ENCODE measurements at regions of chr3 and their contacts with region 1.

Region 1: DNA sequence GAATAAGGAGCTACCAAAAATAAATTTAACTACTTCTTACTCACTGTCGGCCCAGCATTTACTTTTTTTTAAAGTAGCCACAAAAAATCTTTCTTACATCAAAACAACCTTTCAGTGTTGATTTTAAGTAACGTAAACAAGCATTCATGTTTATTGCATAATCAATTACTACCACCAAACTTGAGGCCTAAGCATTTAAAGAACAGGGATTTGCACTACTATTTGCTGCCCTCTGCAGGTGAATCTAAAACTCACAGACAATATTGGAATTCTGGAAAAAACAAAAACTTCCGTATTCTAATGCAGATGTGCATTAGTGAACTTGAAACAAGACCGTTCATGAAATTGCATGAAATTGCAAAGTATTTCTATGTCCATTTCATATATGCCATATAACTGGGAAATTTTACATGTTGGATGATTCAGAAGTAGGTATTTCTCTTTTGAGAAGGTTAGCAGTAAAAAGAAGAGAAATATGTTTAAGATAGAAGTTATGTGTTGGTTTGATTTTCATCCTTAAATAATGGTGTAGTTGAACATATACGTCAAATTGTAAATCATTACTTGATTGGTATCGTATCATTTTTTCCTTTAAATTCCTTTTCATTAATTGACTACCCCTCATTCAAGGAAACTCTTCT is 55.6 kb downstream of the CGGBP1 start:
- DNase-seq: no peak
- H3K4me3 ChIP-seq: no peak overlapping the region
- H3K27ac ChIP-seq: no peak overlapping the region
- H3K4me1 ChIP-seq: no peaks in the 10 kb centered on the region
- H3K27me3 ChIP-seq: no peaks in the 10 kb centered on the region
- CTCF ChIP-seq: peak; percentile 9 to 65 (median 46)
- EP300 ChIP-seq: no peak
- POLR2A ChIP-seq: no peak

Region 2: DNA sequence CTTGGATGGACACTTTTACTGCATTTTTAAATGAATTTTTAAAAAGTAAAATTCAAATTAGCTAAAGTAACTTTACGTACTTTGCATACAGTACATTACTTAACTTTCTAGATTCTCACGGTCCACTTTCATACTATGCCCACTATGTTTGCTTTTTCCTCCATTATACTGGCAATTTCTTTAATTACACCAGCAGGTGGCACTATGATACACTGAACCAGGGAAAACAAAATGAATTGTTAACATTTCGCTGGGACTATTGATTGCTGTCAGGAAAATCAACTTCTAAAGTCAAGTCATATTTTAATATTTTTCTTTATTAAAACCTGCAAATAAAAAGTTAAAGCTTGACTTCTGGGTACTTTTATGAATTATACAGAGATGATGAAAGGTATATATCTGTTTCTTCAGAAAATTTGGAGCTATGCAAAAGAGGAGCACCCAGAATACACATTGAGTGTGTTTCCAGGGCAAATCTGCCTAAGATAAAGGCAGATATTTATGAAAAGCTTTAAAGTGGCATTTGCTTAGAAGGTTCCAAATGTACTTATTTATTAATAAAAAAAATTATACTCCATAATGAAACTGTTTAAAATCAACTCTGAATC is 705.0 kb before region 1 on chr3:
- intact Hi-C with region 1: loop called (anchors 5 kb)
- DNase-seq: no peak
- H3K4me3 ChIP-seq: no peak overlapping the region
- H3K27ac ChIP-seq: no peak overlapping the region
- H3K4me1 ChIP-seq: no peaks in the 10 kb centered on the region
- H3K27me3 ChIP-seq: no peaks in the 10 kb centered on the region
- CTCF ChIP-seq: peak in 2 of 4 experiments; percentile 37 to 40
- EP300 ChIP-seq: no peak
- POLR2A ChIP-seq: no peak

Region 3: GRCh38 chr3:87350364-87351199 is 652.7 kb before region 1 on chr3:
- intact Hi-C with region 1: loop called (anchors 2 kb)
- DNase-seq: no peak
- H3K4me3 ChIP-seq: no peak overlapping the region
- H3K27ac ChIP-seq: no peak overlapping the region
- H3K4me1 ChIP-seq: no peaks in the 10 kb centered on the region
- H3K27me3 ChIP-seq: no peaks in the 10 kb centered on the region
- CTCF ChIP-seq: peak in 3 of 4 experiments; percentile 62 to 91 (median 67)
- EP300 ChIP-seq: no peak
- POLR2A ChIP-seq: no peak

Region 4: DNA sequence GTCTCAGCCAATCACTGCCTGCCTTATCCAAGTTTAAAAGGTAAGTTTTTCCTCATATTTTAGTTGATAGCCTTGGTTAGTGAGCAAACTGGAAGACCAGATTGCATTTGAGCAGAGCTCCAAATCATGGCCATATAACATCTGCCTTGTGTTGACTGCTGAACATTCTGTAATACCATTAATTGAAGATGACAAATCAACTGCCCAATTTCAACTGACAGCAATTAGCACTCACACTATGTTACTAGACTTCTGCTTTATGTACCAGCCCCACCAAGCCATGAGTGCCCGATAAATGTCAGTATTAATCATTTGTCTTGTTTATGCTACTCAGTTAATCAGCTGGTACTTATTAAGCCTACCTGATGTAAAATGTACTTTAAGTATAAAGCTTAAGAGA is 27.5 kb before region 1 on chr3:
- intact Hi-C with region 1: no loop called
- DNase-seq: no peak
- H3K4me3 ChIP-seq: no peak overlapping the region
- H3K27ac ChIP-seq: no peak overlapping the region
- H3K4me1 ChIP-seq: no peaks in the 10 kb centered on the region
- H3K27me3 ChIP-seq: no peaks in the 10 kb centered on the region
- CTCF ChIP-seq: no peak
- EP300 ChIP-seq: no peak
- POLR2A ChIP-seq: no peak